ENCODE measurements at regions of chr3 and their contacts with region 1.

Region 1: DNA sequence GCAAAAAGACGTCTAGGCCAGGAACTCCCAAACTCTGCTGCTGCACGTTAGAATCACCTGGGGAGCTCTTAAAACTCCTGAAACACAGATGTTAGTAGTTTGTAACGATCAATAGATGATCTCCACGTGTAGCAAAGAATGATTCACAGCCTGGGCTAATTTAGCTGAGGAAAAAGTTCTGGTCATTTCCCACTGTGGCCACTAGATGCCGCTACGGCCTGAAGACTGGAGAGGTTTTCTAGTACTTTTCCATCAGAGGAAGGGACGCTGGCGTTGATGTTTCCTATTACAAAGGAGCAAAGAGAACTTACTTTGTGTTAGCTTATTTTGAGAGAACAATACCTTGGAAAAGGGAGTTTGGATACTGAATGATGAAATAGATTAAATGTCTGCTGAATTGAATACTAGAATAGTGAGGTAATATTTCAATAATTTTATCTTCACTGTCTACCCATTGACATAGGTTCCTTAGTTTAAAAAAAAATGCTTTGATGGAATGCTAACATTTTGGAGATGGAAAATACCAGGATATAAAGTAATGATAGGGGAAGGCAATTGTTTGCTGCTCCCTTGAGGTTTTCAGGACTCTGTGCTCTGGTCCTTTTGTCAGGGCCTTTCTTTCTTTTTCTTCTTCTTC is 159.1 kb downstream of the P3H2 start:
- DNase-seq: peak; percentile 53 to 91
- H3K4me3 ChIP-seq: no peak overlapping the region
- H3K27ac ChIP-seq: no peak overlapping the region
- H3K4me1 ChIP-seq: peaks cover 0 to 5% (median 2%) of the 10 kb centered on the region in 4 experiments; a peak in 3 of 7 replicates
- H3K27me3 ChIP-seq: no peaks in the 10 kb centered on the region
- CTCF ChIP-seq: peak; percentile 35 to 95 (median 88)
- EP300 ChIP-seq: no peak
- POLR2A ChIP-seq: no peak
- RAD21 ChIP-seq: peak; percentile 94 to 96

Region 2: GRCh38 chr3:189947948-189948723 is 13.5 kb before region 1 on chr3:
- CTCF ChIA-PET with region 1: interaction called, 21 read pairs
- POLR2A ChIA-PET with region 1: interaction called, 3 read pairs
- DNase-seq: no peak
- H3K4me3 ChIP-seq: no peak overlapping the region
- H3K27ac ChIP-seq: no peak overlapping the region
- H3K4me1 ChIP-seq: no peaks in the 10 kb centered on the region
- H3K27me3 ChIP-seq: no peaks in the 10 kb centered on the region
- CTCF ChIP-seq: peak in 2 of 3 experiments; percentile 55 to 56; a peak in 2 of 4 replicates
- EP300 ChIP-seq: no peak
- POLR2A ChIP-seq: no peak
- RAD21 ChIP-seq: peak; percentile 90

Region 3: GRCh38 chr3:189981668-189982067 is 20.0 kb after region 1 on chr3:
- CTCF ChIA-PET with region 1: interaction called, 16 read pairs
- POLR2A ChIA-PET with region 1: no interaction called
- DNase-seq: no peak
- H3K4me3 ChIP-seq: no peak overlapping the region
- H3K27ac ChIP-seq: no peak overlapping the region
- H3K4me1 ChIP-seq: peaks cover 0 to 19% (median 4%) of the 10 kb centered on the region in 4 experiments; a peak in 4 of 7 replicates
- H3K27me3 ChIP-seq: no peaks in the 10 kb centered on the region
- CTCF ChIP-seq: no peak
- EP300 ChIP-seq: no peak
- POLR2A ChIP-seq: no peak
- RAD21 ChIP-seq: no peak

Region 4: GRCh38 chr3:190032924-190033323 is 71.3 kb after region 1 on chr3:
- CTCF ChIA-PET with region 1: interaction called, 27 read pairs
- POLR2A ChIA-PET with region 1: no interaction called
- DNase-seq: peak in 1 of 2 experiments; percentile 43
- H3K4me3 ChIP-seq: no peak overlapping the region
- H3K27ac ChIP-seq: no peak overlapping the region
- H3K4me1 ChIP-seq: peaks cover 0 to 3% (median under 1%) of the 10 kb centered on the region in 4 experiments; a peak in 4 of 7 replicates
- H3K27me3 ChIP-seq: no peaks in the 10 kb centered on the region
- CTCF ChIP-seq: peak; percentile 29 to 55 (median 54)
- EP300 ChIP-seq: no peak
- POLR2A ChIP-seq: no peak
- RAD21 ChIP-seq: peak; percentile 41 to 60

Region 5: GRCh38 chr3:190205739-190206138 is 244.1 kb after region 1 on chr3:
- CTCF ChIA-PET with region 1: interaction called, 55 read pairs
- POLR2A ChIA-PET with region 1: interaction called, 4 read pairs
- DNase-seq: no peak
- H3K4me3 ChIP-seq: no peak overlapping the region
- H3K27ac ChIP-seq: no peak overlapping the region
- H3K4me1 ChIP-seq: no peaks in the 10 kb centered on the region
- H3K27me3 ChIP-seq: no peaks in the 10 kb centered on the region
- CTCF ChIP-seq: no peak
- EP300 ChIP-seq: no peak
- POLR2A ChIP-seq: no peak
- RAD21 ChIP-seq: no peak

Region 6: DNA sequence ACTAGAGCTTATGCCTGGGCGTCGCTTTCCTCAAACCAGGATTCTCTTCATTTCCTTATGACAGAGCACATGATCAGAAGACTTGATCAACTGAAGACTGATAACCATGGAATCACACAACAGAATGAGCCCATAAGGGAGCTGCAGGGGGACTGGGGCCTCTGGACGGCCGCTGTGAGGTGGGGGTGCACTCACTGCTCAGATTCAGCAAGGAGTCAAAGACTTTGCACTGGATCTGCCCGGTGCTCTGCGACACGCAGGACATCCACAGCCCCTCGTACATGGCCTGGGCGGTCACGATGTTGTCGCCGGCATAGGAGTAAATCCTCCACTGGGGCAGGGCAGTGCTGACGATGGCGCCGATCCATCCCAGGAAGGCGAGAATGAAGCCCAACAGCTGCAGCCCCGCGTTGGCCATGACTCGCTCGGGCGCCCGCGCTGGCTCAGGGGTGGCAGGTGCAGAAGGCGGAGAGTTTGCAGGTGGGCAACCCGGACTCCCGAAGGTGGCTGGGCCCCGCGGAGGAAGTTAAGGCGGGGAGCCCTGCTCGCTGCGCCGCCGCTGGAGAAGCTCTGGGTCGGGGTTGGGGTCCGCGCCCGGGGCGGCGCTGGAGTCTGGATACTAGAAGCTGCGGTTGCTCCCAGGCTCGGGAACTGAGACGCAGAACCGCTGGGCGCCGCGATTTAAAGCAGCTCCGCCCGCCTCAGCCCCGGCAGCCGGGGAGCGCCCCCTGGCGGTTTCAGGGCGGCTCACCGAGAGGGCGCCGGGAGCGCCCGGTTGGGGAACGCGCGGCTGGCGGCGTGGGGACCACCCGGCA is 360.4 kb after region 1 on chr3 and contains the start of gene CLDN1:
- CTCF ChIA-PET with region 1: interaction called, 54 read pairs
- POLR2A ChIA-PET with region 1: interaction called, 4 read pairs
- DNase-seq: peak; percentile 73 to 95
- H3K4me3 ChIP-seq: peak within 1 kb of the TSS; percentile 76 to 79 (median 78)
- H3K27ac ChIP-seq: no peak within 1 kb of the TSS; the same call in 1 of the 2 replicates
- H3K4me1 ChIP-seq: peaks cover 2 to 13% (median 8%) of the 10 kb centered on the region in 4 experiments; a peak in 5 of 7 replicates
- H3K27me3 ChIP-seq: peaks cover 0 to 7% (median 6%) of the 10 kb centered on the region in 4 experiments; a peak in 5 of 7 replicates
- CTCF ChIP-seq: peak; percentile 74 to 98 (median 84)
- EP300 ChIP-seq: peak in 1 of 2 experiments; percentile 38; a peak in 1 of 3 replicates
- POLR2A ChIP-seq: peak in 1 of 2 experiments; percentile 85; a peak in 2 of 3 replicates
- RAD21 ChIP-seq: peak; percentile 76 to 87
- total RNA-seq, gene CLDN1: 3.0 and 3.1 TPM in 2 replicates